ENCODE measurements at regions of chr15 and their contacts with region 1.

Region 1: GRCh38 chr15:56428821-56429458 is 36.0 kb downstream of the MNS1 start:
- DNase-seq: peak in 1 of 2 donors; percentile 30
- ATAC-seq: peak in 1 of 3 donors; percentile 38
- H3K4me3 ChIP-seq: no peak overlapping the region
- H3K4me3 Mint-ChIP-seq: no peak overlapping the region
- H3K27ac ChIP-seq: no peak overlapping the region
- H3K27ac Mint-ChIP-seq: no peak overlapping the region
- H3K4me1 ChIP-seq: no peaks in the 10 kb centered on the region
- H3K4me1 Mint-ChIP-seq: peaks cover 14 to 18% of the 10 kb centered on the region in 2 donors
- H3K27me3 ChIP-seq: no peaks in the 10 kb centered on the region
- H3K27me3 Mint-ChIP-seq: no peaks in the 10 kb centered on the region
- CTCF ChIP-seq: peak; percentile 40

Region 2: GRCh38 chr15:55649054-55649423 is 779.9 kb before region 1 on chr15:
- intact Hi-C with region 1: loop called (anchors 10 kb)
- DNase-seq: no peak
- ATAC-seq: no peak
- H3K4me3 ChIP-seq: no peak overlapping the region
- H3K4me3 Mint-ChIP-seq: no peak overlapping the region
- H3K27ac ChIP-seq: no peak overlapping the region
- H3K27ac Mint-ChIP-seq: no peak overlapping the region
- H3K4me1 ChIP-seq: no peaks in the 10 kb centered on the region
- H3K4me1 Mint-ChIP-seq: no peaks in the 10 kb centered on the region
- H3K27me3 ChIP-seq: no peaks in the 10 kb centered on the region
- H3K27me3 Mint-ChIP-seq: peaks cover 0 to 2% of the 10 kb centered on the region in 2 donors
- CTCF ChIP-seq: no peak

Region 3: GRCh38 chr15:56245871-56246814 is 182.8 kb before region 1 on chr15:
- intact Hi-C with region 1: loop called (anchors 5 kb)
- DNase-seq: peak; percentile 81 to 92
- ATAC-seq: peak; percentile 78 to 89 (median 80)
- H3K4me3 ChIP-seq: peak overlapping the region; percentile 25
- H3K4me3 Mint-ChIP-seq: peak overlapping the region; percentile 92
- H3K27ac ChIP-seq: peak overlapping the region; percentile 68
- H3K27ac Mint-ChIP-seq: peak overlapping the region; percentile 89 to 90
- H3K4me1 ChIP-seq: peaks cover 21% of the 10 kb centered on the region
- H3K4me1 Mint-ChIP-seq: peaks cover 35 to 38% of the 10 kb centered on the region in 2 donors
- H3K27me3 ChIP-seq: no peaks in the 10 kb centered on the region
- H3K27me3 Mint-ChIP-seq: peaks cover 0 to 5% of the 10 kb centered on the region in 2 donors
- CTCF ChIP-seq: peak; percentile 100

Measured in natural killer cell (primary cell).